Endothelial cell of umbilical vein (primary cell): ENCODE measurements at regions of chr5 and their contacts with region 1.

Region 1: DNA sequence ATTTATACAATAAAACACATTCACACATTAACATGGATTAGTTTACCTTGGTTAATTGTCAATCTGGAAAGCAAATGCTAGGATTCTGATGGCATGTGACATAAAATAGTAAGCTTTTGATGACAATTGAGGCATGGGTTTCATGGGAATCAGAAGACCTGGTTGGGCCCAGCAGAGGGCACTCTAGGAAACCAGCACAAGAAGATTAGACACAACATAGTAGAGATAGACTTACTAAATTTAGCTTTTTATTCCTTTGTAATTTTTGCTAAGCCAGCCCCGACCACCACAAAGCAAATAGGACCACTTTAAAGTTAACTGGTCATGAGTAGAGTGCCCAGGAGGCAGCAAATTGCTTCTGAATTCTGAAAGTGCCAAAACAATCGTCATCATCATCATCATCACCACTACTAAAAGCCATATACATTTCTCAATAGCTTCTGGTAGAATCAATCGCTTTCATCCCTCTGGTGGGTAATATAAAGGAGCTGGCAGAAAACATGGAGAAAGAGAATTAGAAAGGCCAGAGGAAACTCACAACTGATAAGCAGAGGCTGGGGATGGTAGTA is 163.2 kb downstream of the ARRDC3 start:
- DNase-seq: peak; percentile 63
- H3K4me3 ChIP-seq: no peak overlapping the region
- H3K27ac ChIP-seq: no peak overlapping the region
- H3K4me1 ChIP-seq: no peaks in the 10 kb centered on the region
- H3K27me3 ChIP-seq: no peaks in the 10 kb centered on the region
- CTCF ChIP-seq: peak; percentile 30 to 57
- POLR2A ChIP-seq: no peak

Region 2: DNA sequence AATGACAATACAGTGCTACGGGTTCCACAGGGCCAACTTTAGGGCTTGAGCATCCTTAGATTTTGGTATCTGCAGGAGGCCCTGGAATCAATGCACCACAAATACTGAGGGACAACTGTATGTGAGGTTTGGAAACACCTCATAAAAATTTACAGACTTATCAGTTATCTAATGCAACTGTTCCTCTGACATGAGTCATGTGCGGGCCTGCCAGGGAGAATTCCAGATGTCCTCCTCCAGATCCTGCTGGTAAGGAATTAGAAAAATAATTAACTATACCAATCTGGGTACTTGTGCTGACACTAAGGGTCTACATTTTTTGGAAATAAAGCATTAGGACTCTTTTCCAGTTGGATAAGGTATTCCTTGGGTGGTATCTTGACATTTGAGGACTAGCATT is 170.1 kb before region 1 on chr5:
- CTCF ChIA-PET with region 1: no interaction called
- POLR2A ChIA-PET with region 1: no interaction called
- dilution Hi-C with region 1: no loop called
- intact Hi-C with region 1: no loop called
- DNase-seq: peak; percentile 53
- H3K4me3 ChIP-seq: no peak overlapping the region
- H3K27ac ChIP-seq: no peak overlapping the region
- H3K4me1 ChIP-seq: peaks cover 10% of the 10 kb centered on the region
- H3K27me3 ChIP-seq: no peaks in the 10 kb centered on the region
- CTCF ChIP-seq: no peak
- POLR2A ChIP-seq: no peak

Region 3: GRCh38 chr5:91101600-91102379 is 118.1 kb before region 1 on chr5:
- CTCF ChIA-PET with region 1: interaction called, 9 read pairs
- POLR2A ChIA-PET with region 1: no interaction called
- dilution Hi-C with region 1: no loop called
- intact Hi-C with region 1: loop called (anchors 1 kb)
- DNase-seq: peak; percentile 85
- H3K4me3 ChIP-seq: no peak overlapping the region
- H3K27ac ChIP-seq: no peak overlapping the region
- H3K4me1 ChIP-seq: no peaks in the 10 kb centered on the region
- H3K27me3 ChIP-seq: no peaks in the 10 kb centered on the region
- CTCF ChIP-seq: peak; percentile 67 to 70
- POLR2A ChIP-seq: no peak

Region 4: GRCh38 chr5:91206734-91207133 is 13.2 kb before region 1 on chr5:
- CTCF ChIA-PET with region 1: interaction called, 19 read pairs
- POLR2A ChIA-PET with region 1: no interaction called
- dilution Hi-C with region 1: no loop called
- intact Hi-C with region 1: no loop called
- DNase-seq: no peak
- H3K4me3 ChIP-seq: no peak overlapping the region
- H3K27ac ChIP-seq: no peak overlapping the region
- H3K4me1 ChIP-seq: peaks cover 3% of the 10 kb centered on the region
- H3K27me3 ChIP-seq: no peaks in the 10 kb centered on the region
- CTCF ChIP-seq: no peak
- POLR2A ChIP-seq: no peak

Region 5: DNA sequence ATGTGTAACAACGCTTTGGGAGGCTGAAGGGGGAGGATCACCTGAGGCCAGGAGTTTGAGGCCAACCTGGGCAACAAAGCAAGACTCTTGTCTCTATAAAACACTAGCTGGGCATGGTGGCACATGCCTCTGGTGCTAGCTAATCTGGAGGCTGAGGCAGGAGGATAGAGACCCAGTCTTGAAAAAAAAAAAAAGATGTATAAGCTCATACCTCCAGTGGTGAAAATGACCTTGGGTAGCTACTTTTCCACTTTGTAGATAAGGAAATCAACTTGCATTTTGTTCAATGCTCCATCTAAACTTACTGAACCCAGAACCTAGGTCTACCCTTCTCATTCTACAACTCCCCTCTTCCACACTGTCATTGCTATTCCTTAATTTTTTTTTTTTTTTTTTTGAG is 146.7 kb after region 1 on chr5:
- CTCF ChIA-PET with region 1: interaction called, 11 read pairs
- POLR2A ChIA-PET with region 1: no interaction called
- dilution Hi-C with region 1: no loop called
- intact Hi-C with region 1: no loop called
- DNase-seq: peak; percentile 45
- H3K4me3 ChIP-seq: no peak overlapping the region
- H3K27ac ChIP-seq: no peak overlapping the region
- H3K4me1 ChIP-seq: no peaks in the 10 kb centered on the region
- H3K27me3 ChIP-seq: no peaks in the 10 kb centered on the region
- CTCF ChIP-seq: no peak
- POLR2A ChIP-seq: no peak

Region 6: DNA sequence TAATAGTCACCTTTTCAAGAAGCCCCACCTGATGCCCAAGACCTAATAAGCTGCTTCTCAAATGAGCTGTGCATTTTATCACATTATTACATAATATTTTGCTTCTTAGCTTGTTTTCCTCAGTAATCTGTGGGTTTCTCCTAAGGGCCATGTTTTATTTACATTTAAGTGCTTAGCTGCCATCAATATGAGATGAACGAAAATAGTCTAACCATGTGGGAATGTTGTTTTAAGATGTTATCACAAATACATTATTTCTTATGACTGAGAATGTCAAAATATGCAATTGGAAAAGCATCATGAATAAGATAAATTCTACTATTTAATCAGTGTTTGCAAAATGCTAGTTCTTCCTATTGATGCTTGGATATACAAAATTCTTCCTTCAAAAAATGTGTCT is 153.1 kb after region 1 on chr5:
- CTCF ChIA-PET with region 1: interaction called, 11 read pairs
- POLR2A ChIA-PET with region 1: no interaction called
- dilution Hi-C with region 1: no loop called
- intact Hi-C with region 1: no loop called
- DNase-seq: no peak
- H3K4me3 ChIP-seq: no peak overlapping the region
- H3K27ac ChIP-seq: no peak overlapping the region
- H3K4me1 ChIP-seq: peaks cover 1% of the 10 kb centered on the region
- H3K27me3 ChIP-seq: no peaks in the 10 kb centered on the region
- CTCF ChIP-seq: no peak
- POLR2A ChIP-seq: no peak